MCF 10A (cell line): ENCODE measurements at regions of chr16 and their contacts with region 1.

Region 1: DNA sequence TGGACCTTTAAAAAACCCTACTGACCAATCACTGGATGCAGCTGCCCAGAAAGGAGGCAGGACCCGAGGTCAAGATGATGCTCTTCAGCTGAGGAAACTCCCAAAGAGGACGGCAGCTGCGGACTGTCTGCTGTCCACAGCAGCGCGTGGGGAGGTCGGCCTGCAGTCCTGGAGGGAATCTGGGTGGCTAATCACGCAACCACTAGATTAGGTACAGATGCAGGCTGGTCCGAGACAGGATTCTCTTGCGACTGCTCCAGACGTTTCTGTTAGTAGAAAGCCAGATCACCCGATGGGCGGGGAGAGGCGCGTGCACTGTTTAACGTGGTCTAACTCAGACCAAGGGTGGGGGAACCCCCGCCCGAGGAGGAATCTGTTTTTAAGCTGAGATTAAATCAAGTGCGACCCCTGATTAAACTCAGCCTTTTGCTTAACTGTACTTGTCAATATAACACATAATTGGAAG is 8.8 kb downstream of the CTRB2 start:
- DNase-seq: no peak
- H3K4me3 Mint-ChIP-seq: no peak overlapping the region
- H3K27ac Mint-ChIP-seq: no peak overlapping the region
- H3K4me1 Mint-ChIP-seq: no peaks in the 10 kb centered on the region
- H3K27me3 Mint-ChIP-seq: peaks cover 23% of the 10 kb centered on the region
- CTCF ChIP-seq: no peak

Region 2: GRCh38 chr16:75151798-75152197 is 46.4 kb before region 1 on chr16:
- CTCF ChIA-PET with region 1: no interaction called
- POLR2A ChIA-PET with region 1: no interaction called
- intact Hi-C with region 1: no loop called
- DNase-seq: no peak
- H3K4me3 Mint-ChIP-seq: no peak overlapping the region
- H3K27ac Mint-ChIP-seq: no peak overlapping the region
- H3K4me1 Mint-ChIP-seq: no peaks in the 10 kb centered on the region
- H3K27me3 Mint-ChIP-seq: no peaks in the 10 kb centered on the region
- CTCF ChIP-seq: no peak

Region 3: DNA sequence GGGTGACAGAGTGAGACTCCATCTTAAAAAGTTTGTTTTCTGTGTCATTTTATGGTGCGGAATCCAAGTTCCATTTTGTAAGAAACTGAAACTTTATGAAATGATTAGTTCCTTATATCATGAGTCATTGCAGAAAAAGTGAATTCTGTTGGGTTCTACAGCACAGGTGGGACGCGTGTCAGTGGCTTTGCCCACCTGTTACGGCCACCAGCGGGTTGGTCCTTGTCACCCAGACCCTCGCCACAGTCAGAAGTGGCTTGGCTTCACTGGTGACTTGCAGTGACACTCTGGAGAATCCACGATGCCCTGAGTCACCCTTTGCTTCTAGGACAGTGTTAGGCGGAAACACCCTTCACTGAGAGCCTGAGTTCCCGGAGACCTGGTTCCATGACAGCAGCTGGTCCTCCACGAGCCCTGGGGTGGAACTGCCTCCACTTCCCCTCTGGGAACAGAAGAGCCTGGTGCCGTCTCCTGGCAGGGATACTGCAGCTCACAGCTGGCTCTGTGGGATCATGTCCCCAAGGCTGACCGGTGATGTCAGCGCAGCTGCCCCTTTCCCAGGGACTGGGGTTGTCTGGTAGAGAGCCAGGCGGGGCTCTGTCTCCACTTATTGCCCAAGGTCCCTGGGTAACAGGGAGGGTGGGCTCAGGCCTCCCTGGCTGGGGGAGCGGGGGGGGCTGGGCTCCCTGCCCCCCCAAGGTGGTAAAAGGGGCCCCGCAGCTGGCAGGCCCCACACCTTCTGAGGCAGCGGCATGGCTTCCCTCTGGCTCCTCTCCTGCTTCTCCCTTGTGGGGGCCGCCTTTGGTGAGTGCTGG is 20.3 kb after region 1 on chr16 and contains the start of gene CTRB1:
- CTCF ChIA-PET with region 1: interaction called, 16 read pairs
- POLR2A ChIA-PET with region 1: interaction called, 3 read pairs
- intact Hi-C with region 1: no loop called
- DNase-seq: no peak
- H3K4me3 Mint-ChIP-seq: no peak within 1 kb of the TSS
- H3K27ac Mint-ChIP-seq: no peak within 1 kb of the TSS
- H3K4me1 Mint-ChIP-seq: no peaks in the 10 kb centered on the region
- H3K27me3 Mint-ChIP-seq: no peaks in the 10 kb centered on the region
- CTCF ChIP-seq: no peak
- total RNA-seq, gene CTRB1: not detected in 2 replicates

Region 4: GRCh38 chr16:75379911-75380847 is 182.0 kb after region 1 on chr16:
- CTCF ChIA-PET with region 1: interaction called, 33 read pairs
- POLR2A ChIA-PET with region 1: interaction called, 3 read pairs
- intact Hi-C with region 1: loop called (anchors 1 kb)
- DNase-seq: no peak
- H3K4me3 Mint-ChIP-seq: no peak overlapping the region
- H3K27ac Mint-ChIP-seq: peak overlapping the region; percentile 19
- H3K4me1 Mint-ChIP-seq: peaks cover 38% of the 10 kb centered on the region
- H3K27me3 Mint-ChIP-seq: no peaks in the 10 kb centered on the region
- CTCF ChIP-seq: no peak

Region 5: GRCh38 chr16:75385507-75386152 is 187.5 kb after region 1 on chr16:
- CTCF ChIA-PET with region 1: interaction called, 40 read pairs
- POLR2A ChIA-PET with region 1: interaction called, 3 read pairs
- intact Hi-C with region 1: loop called (anchors 1 kb)
- DNase-seq: peak; percentile 85
- H3K4me3 Mint-ChIP-seq: no peak overlapping the region
- H3K27ac Mint-ChIP-seq: no peak overlapping the region
- H3K4me1 Mint-ChIP-seq: peaks cover 12% of the 10 kb centered on the region
- H3K27me3 Mint-ChIP-seq: no peaks in the 10 kb centered on the region
- CTCF ChIP-seq: peak; percentile 66

Region 6: DNA sequence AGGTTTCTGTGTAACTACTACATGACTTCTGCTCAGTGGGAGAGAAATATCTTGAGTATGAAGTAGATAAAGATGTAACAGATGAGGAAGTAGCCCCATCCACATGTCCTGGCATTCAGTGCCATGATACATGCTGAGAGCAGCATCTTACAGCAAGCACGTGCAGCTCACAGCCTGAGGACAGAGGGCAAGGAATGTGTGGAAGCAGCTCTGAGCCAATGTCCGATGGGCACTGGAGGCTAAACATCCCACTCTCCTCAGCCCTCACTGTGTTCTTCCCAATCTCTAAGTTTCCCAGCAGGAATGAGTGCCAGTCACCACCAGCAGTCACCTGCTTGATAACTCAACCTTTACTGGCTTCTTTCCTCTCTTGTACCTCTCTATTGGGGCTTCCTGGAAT is 194.7 kb after region 1 on chr16:
- CTCF ChIA-PET with region 1: interaction called, 40 read pairs
- POLR2A ChIA-PET with region 1: no interaction called
- intact Hi-C with region 1: no loop called
- DNase-seq: no peak
- H3K4me3 Mint-ChIP-seq: no peak overlapping the region
- H3K27ac Mint-ChIP-seq: no peak overlapping the region
- H3K4me1 Mint-ChIP-seq: peaks cover 6% of the 10 kb centered on the region
- H3K27me3 Mint-ChIP-seq: no peaks in the 10 kb centered on the region
- CTCF ChIP-seq: no peak

Region 7: DNA sequence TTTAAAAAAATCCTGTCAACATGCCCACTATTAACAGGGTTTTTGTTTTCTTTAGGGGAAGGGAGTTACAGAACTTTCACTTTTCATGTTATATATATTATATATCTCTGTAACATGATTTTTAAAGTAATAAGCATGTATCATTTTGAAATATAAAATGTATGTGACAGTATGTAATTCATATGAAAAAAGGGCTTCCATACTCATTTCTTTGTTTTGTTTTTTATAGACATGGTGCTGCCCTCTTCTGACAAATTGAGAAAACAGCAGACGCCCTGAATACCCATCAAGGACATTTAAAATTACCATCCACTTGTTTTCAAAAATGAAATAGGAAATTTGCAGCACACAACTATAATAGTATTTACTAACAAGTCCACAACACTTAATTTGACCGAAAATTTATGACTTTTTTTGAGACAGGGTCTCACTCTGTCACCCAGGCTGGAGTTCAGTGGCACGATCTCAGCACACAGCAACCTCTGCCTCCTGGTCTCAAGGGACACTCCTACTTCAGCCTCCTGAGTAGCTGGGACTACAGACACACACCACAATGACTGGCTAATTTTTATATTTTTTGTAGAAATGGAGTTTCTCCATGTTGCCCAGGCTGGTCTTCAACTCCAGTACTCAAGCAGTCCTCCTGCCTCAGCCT is 204.8 kb after region 1 on chr16:
- CTCF ChIA-PET with region 1: interaction called, 117 read pairs
- POLR2A ChIA-PET with region 1: interaction called, 4 read pairs
- intact Hi-C with region 1: loop called (anchors 1 kb)
- DNase-seq: peak; percentile 47
- H3K4me3 Mint-ChIP-seq: no peak overlapping the region
- H3K27ac Mint-ChIP-seq: no peak overlapping the region
- H3K4me1 Mint-ChIP-seq: peaks cover 5% of the 10 kb centered on the region
- H3K27me3 Mint-ChIP-seq: no peaks in the 10 kb centered on the region
- CTCF ChIP-seq: peak; percentile 56

Region 8: GRCh38 chr16:75764154-75764768 is 566.1 kb after region 1 on chr16:
- CTCF ChIA-PET with region 1: interaction called, 8 read pairs
- POLR2A ChIA-PET with region 1: no interaction called
- intact Hi-C with region 1: loop called (anchors 1 kb)
- DNase-seq: peak; percentile 75
- H3K4me3 Mint-ChIP-seq: no peak overlapping the region
- H3K27ac Mint-ChIP-seq: no peak overlapping the region
- H3K4me1 Mint-ChIP-seq: peaks cover 5% of the 10 kb centered on the region
- H3K27me3 Mint-ChIP-seq: peaks cover 13% of the 10 kb centered on the region
- CTCF ChIP-seq: peak; percentile 67

Region 9: GRCh38 chr16:76577003-76577402 is 1378.8 kb after region 1 on chr16:
- CTCF ChIA-PET with region 1: no interaction called
- POLR2A ChIA-PET with region 1: no interaction called
- intact Hi-C with region 1: no loop called
- DNase-seq: no peak
- H3K4me3 Mint-ChIP-seq: no peak overlapping the region
- H3K27ac Mint-ChIP-seq: no peak overlapping the region
- H3K4me1 Mint-ChIP-seq: no peaks in the 10 kb centered on the region
- H3K27me3 Mint-ChIP-seq: no peaks in the 10 kb centered on the region
- CTCF ChIP-seq: no peak